ENCODE measurements at regions of chr3 and their contacts with region 1.

Region 1: GRCh38 chr3:113264283-113265131 is 53.1 kb downstream of the BOC start:
- DNase-seq: peak in 1 of 2 donors; percentile 18
- H3K4me3 ChIP-seq: no peak overlapping the region
- H3K27ac ChIP-seq: peak overlapping the region; percentile 13 to 82
- H3K4me1 ChIP-seq: peaks cover 10 to 16% of the 10 kb centered on the region in 2 donors
- H3K27me3 ChIP-seq: no peaks in the 10 kb centered on the region
- CTCF ChIP-seq: no peak
- POLR2A ChIP-seq: no peak

Region 2: GRCh38 chr3:113148286-113148685 is 116.2 kb before region 1 on chr3:
- intact Hi-C with region 1: loop called (anchors 5 kb)
- DNase-seq: peak; percentile 55 to 75
- H3K4me3 ChIP-seq: peak overlapping the region in 1 of 2 donors; percentile 9
- H3K27ac ChIP-seq: peak overlapping the region; percentile 74 to 83
- H3K4me1 ChIP-seq: peaks cover 9 to 21% of the 10 kb centered on the region in 2 donors
- H3K27me3 ChIP-seq: no peaks in the 10 kb centered on the region
- CTCF ChIP-seq: no peak
- POLR2A ChIP-seq: no peak

Measured in uterus (tissue), 4 donors.